ENCODE measurements at regions of chr10 and their contacts with region 1.

Region 1: GRCh38 chr10:84317174-84317573 is 11.2 kb upstream of the CCSER2 start:
- H3K4me3 Mint-ChIP-seq: no peak overlapping the region
- H3K27ac Mint-ChIP-seq: no peak overlapping the region
- H3K4me1 Mint-ChIP-seq: peaks cover 13% of the 10 kb centered on the region
- H3K27me3 Mint-ChIP-seq: peaks cover 5% of the 10 kb centered on the region

Region 2: DNA sequence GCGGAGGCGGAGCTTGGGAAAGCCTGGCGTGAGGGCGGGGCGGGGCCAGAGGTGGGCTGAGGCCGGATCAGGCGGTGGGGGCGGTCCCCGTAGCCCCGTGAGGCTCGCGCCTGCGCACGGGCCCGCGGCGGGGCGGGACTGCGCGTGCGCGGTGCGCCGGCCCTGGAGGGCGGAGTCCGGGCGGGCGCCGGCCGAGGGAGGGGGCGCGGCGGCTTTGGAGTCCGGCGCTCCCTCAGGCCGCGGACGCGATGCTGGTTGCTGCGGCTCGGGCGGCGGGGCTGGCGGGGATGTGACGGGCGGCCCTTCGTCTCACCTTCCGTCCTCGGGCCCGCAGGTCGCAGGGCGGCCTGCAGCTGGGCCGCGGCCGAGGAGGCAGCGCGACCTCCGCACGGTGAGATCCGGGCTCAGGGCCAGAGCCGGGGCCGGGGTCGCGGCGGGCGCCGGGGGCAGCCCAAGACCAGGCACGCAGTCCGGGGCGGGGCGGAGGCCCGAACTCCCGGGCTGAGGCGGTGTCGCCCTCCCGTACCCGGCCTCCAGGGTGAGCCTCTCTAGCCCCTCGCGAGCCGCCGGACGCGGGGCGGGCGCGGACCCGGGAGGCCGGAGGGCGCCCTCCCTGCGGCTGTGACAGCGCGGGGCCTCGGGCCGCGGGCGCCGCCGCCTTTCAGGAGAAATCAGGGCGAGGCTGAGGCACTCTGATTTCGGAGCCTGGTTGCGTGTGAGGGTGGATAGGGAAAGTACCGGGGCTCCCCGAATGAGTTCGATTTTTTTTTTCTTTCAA is 11.4 kb after region 1 on chr10 and contains the start of gene CCSER2:
- intact Hi-C with region 1: loop called (anchors 1 kb)
- H3K4me3 Mint-ChIP-seq: peak within 1 kb of the TSS; percentile 81
- H3K27ac Mint-ChIP-seq: peak within 1 kb of the TSS; percentile 89
- H3K4me1 Mint-ChIP-seq: peaks cover 27% of the 10 kb centered on the region
- H3K27me3 Mint-ChIP-seq: no peaks in the 10 kb centered on the region

Region 3: GRCh38 chr10:84352251-84352842 is 35.2 kb after region 1 on chr10:
- intact Hi-C with region 1: no loop called
- H3K4me3 Mint-ChIP-seq: no peak overlapping the region
- H3K27ac Mint-ChIP-seq: no peak overlapping the region
- H3K4me1 Mint-ChIP-seq: peaks cover 20% of the 10 kb centered on the region
- H3K27me3 Mint-ChIP-seq: no peaks in the 10 kb centered on the region

Region 4: GRCh38 chr10:84397735-84398144 is 80.6 kb after region 1 on chr10:
- intact Hi-C with region 1: no loop called
- H3K4me3 Mint-ChIP-seq: no peak overlapping the region
- H3K27ac Mint-ChIP-seq: peak overlapping the region; percentile 38
- H3K4me1 Mint-ChIP-seq: peaks cover 38% of the 10 kb centered on the region
- H3K27me3 Mint-ChIP-seq: no peaks in the 10 kb centered on the region

Region 5: GRCh38 chr10:84540617-84541561 is 223.7 kb after region 1 on chr10:
- intact Hi-C with region 1: no loop called
- H3K4me3 Mint-ChIP-seq: peak overlapping the region; percentile 17
- H3K27ac Mint-ChIP-seq: no peak overlapping the region
- H3K4me1 Mint-ChIP-seq: peaks cover 15% of the 10 kb centered on the region
- H3K27me3 Mint-ChIP-seq: peaks cover 36% of the 10 kb centered on the region